Cardiac septum (tissue), 1 donor: ENCODE measurements at regions of chr15 and their contacts with region 1.

Region 1: GRCh38 chr15:22980189-22981050 is at the start of gene CYFIP1:
- DNase-seq: peak; percentile 93
- total RNA-seq, gene CYFIP1: 35.6 TPM

Region 2: GRCh38 chr15:22838292-22839042 is 142.0 kb before region 1 on chr15 and contains the start of gene NIPA2:
- intact Hi-C with region 1: loop called (anchors 2 kb)
- DNase-seq: peak; percentile 99
- total RNA-seq, gene NIPA2: 24.3 TPM

Region 3: GRCh38 chr15:22944651-22945050 is 35.8 kb before region 1 on chr15:
- intact Hi-C with region 1: loop called (anchors 5 kb)
- DNase-seq: no peak

Region 4: GRCh38 chr15:22968366-22968765 is 12.1 kb before region 1 on chr15:
- intact Hi-C with region 1: loop called (anchors 2 kb)
- DNase-seq: peak; percentile 9

Region 5: DNA sequence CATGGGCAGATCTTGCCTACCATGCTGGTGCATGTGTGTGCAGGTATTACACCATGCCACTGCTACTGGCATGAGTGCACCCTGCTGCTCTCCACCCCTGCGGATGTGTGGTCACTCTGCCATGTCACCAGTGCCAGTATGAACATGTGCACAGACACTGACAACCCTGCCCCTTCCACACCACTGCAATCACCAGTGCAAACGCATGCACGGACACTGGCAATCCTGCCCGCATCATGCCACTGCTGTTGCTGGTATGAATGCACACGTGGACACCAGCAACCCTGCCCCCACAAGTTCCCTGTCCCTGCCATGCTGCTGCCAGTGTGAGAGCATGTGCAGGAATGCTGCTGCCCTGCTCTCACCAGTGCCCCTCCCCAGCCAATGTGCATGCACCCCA is 83.7 kb after region 1 on chr15:
- intact Hi-C with region 1: no loop called
- DNase-seq: no peak